Posterior vena cava (tissue), 2 donors: ENCODE measurements at regions of chr11 and their contacts with region 1.

Region 1: GRCh38 chr11:111878849-111879636 is at the starts of genes CFAP68 and FDXACB1:
- DNase-seq: peak; percentile 98
- total RNA-seq, gene CFAP68: 9.0 to 9.2 TPM
- total RNA-seq, gene FDXACB1: 1.3 to 1.8 TPM

Region 2: DNA sequence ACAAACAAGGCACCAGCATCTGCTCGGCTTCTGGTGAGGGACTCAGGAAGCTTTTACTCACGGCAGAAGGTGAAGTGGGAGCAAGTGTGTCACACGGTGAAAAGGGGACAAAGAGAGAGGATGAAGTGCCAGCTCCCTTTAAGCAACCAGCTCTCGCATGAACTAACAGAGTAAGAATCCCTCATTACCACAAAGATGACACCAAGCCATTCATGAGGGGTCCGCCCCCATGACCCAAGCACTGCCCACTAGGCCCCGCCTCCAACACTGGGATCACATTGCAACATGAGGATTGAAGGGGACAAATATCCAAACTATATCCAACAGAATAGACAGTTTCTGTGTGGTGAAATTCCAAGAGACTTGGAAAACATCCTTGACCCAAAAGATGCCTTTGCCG is 831.7 kb before region 1 on chr11:
- intact Hi-C with region 1: loop called in 1 of 2 experiments (anchors 5 kb)
- DNase-seq: no peak

Region 3: DNA sequence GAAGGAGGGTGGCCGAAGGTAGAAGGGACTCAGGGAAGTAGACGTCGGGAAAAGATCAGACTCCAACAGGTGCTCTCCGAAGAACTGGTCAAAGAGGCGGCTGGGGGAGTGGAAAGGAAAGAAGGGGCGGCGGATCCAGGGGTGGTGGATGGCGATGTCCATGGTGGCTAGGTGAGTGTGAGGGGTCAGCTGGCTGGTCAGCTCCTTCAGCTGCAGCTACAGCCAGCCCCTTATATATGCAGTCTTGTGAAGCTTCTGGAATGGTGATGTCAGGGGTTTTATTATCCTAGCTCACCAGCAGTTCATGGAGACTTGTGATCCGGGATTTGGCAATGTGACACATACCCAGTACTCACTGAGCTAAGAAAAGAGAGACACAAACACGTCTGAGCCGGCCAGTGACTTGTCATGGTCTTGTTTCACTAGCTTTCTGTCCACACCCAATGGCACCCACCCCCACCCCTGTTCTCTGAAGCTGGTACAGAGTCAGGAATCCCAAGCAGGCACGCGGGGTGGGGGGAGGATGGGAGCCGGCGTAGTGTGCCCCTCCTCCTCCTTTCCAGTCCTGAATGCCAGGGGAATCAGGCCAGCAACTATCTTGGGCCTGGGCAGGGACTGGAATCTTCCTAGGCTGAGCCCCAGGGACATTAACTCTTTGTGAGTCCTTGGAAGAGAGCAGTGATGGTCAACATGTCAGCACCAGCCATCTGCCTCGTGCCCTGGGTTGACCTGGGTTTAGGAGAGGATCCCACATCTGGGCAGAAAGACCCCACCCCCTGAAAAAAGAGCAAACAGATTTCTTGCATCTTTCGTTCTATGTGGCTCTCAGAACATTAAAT is 32.7 kb after region 1 on chr11 and contains the start of gene CRYAB:
- intact Hi-C with region 1: loop called in 1 of 2 experiments (anchors 5 kb)
- DNase-seq: peak; percentile 95
- total RNA-seq, gene CRYAB: 527 to 713 TPM

Region 4: DNA sequence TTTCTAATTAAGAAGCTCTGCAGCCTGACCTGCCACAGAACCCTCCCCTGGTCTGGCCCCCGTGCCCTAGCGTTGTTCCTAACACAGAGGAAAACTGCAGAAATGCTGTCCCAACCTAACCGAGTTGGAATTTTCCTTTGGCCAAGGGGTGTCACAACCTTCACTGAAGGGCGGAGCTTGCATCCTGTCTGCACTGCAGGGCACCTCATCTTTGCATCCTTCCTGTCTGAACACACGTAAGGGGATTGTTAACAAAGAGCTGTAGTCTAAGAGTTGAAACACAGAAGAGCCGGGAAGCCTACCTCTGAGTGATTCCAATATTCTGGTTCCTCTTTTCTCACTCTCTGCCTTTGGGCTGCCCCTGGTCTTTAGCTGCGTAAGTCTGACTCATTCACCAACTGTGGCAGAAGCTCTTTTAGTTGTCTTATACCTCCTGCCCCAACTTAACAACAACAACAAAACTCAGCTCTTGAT is 59.7 kb after region 1 on chr11:
- intact Hi-C with region 1: loop called in 1 of 2 experiments (anchors 10 kb)
- DNase-seq: peak; percentile 63

Region 5: GRCh38 chr11:111977146-111978027 is 98.3 kb after region 1 on chr11:
- intact Hi-C with region 1: loop called in 1 of 2 experiments (anchors 10 kb)
- DNase-seq: peak; percentile 91

Region 6: DNA sequence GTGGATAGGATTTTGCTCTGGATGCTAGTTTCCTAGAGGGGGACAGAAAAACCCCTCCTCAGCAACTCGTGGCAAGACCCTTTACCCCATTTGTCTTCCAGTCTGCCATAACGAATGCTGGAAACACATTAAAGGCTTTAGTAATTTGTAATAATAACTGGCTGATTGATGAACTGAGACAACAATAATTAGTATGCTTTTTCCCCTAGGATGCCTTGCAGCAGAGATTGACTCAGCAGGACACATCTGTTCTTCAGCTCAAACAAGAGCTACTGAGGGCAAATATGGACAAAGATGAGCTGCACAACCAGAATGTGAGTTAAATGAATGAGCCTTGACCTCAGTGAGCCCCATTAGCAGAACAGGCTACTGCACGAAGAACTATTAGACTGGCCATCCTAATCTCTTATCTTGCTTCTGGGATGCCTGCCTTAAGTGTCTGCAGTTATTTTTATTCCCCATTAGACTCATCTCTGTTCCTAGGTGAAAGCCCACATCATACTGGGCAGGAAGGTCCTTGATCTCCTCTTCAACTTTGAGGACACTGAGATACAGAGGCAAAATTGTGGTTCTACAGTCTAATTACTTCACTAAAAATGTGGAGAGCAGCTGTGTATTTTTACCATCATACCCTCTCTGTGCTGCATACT is 113.3 kb after region 1 on chr11:
- intact Hi-C with region 1: no loop called
- DNase-seq: no peak